ENCODE measurements at regions of chr10 and their contacts with region 1.

Region 1: GRCh38 chr10:128035557-128035973 is 90.7 kb downstream of the MKI67 start:
- DNase-seq: no peak
- ATAC-seq: peak; percentile 93
- H3K4me3 ChIP-seq: no peak overlapping the region
- H3K27ac ChIP-seq: no peak overlapping the region
- H3K4me1 ChIP-seq: no peaks in the 10 kb centered on the region
- H3K27me3 ChIP-seq: no peaks in the 10 kb centered on the region; a peak in 2 of 4 replicates
- CTCF ChIP-seq: peak; percentile 77 to 91 (median 78)
- EP300 ChIP-seq: no peak
- POLR2A ChIP-seq: no peak
- RAD21 ChIP-seq: peak; percentile 81

Region 2: DNA sequence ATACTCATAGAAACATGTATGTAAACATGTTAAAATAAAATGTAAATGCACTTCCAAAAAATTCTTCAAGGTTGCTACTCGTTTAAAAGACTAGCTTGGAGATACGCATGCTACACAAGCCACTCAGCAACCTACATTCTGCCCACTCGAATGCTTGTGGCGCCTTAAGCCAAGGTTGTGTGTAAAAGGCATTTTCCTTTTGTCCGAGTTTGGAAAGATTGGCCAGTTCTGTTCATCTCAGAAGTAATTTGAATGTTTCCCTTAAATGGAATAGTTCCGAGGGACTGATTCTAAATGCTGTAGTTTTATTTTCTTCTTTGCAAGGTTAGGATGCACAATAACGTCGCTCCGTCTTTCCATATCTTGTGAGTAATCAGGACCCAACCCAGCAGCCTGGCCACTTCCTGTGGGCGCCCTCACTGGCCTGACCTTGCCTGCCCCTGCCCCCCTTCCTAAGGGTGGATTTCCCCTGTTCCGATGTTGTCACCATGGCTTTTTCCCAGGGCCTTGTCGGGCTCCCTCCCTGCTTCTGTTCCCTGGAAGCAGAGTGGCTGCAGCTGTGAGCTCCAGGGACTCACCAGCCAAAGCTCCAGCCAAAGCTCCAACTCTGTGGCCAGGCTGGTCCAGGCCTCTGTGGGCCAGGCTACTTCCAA is 58.1 kb before region 1 on chr10:
- CTCF ChIA-PET with region 1: no interaction called
- POLR2A ChIA-PET with region 1: no interaction called
- RAD21 ChIA-PET with region 1: no interaction called
- SMC1A ChIA-PET with region 1: no interaction called
- in situ Hi-C with region 1: no loop called
- intact Hi-C with region 1: no loop called
- DNase-seq: no peak
- ATAC-seq: no peak
- H3K4me3 ChIP-seq: no peak overlapping the region
- H3K27ac ChIP-seq: no peak overlapping the region
- H3K4me1 ChIP-seq: no peaks in the 10 kb centered on the region
- H3K27me3 ChIP-seq: peaks cover 0 to 1% of the 10 kb centered on the region in 2 experiments; a peak in 1 of 4 replicates
- CTCF ChIP-seq: no peak
- EP300 ChIP-seq: no peak
- POLR2A ChIP-seq: no peak
- RAD21 ChIP-seq: no peak

Region 3: GRCh38 chr10:128047351-128047750 is 11.8 kb after region 1 on chr10:
- CTCF ChIA-PET with region 1: interaction called, 52 read pairs
- POLR2A ChIA-PET with region 1: interaction called, 5 read pairs
- RAD21 ChIA-PET with region 1: interaction called, 11 read pairs
- SMC1A ChIA-PET with region 1: interaction called, 26 read pairs
- in situ Hi-C with region 1: no loop called
- intact Hi-C with region 1: no loop called
- DNase-seq: peak; percentile 63
- ATAC-seq: peak; percentile 99
- H3K4me3 ChIP-seq: peak overlapping the region; percentile 70
- H3K27ac ChIP-seq: peak overlapping the region; percentile 54
- H3K4me1 ChIP-seq: peaks cover 30% of the 10 kb centered on the region
- H3K27me3 ChIP-seq: no peaks in the 10 kb centered on the region
- CTCF ChIP-seq: no peak
- EP300 ChIP-seq: no peak
- POLR2A ChIP-seq: peak; percentile 89
- RAD21 ChIP-seq: no peak

Region 4: GRCh38 chr10:128064108-128064969 is 28.8 kb after region 1 on chr10:
- CTCF ChIA-PET with region 1: interaction called, 277 read pairs
- POLR2A ChIA-PET with region 1: interaction called, 5 read pairs
- RAD21 ChIA-PET with region 1: interaction called, 103 read pairs
- SMC1A ChIA-PET with region 1: interaction called, 128 read pairs
- in situ Hi-C with region 1: no loop called
- intact Hi-C with region 1: loop called (anchors 1 kb)
- DNase-seq: peak; percentile 80
- ATAC-seq: peak; percentile 79
- H3K4me3 ChIP-seq: no peak overlapping the region
- H3K27ac ChIP-seq: peak overlapping the region; percentile 76
- H3K4me1 ChIP-seq: peaks cover 36% of the 10 kb centered on the region
- H3K27me3 ChIP-seq: no peaks in the 10 kb centered on the region
- CTCF ChIP-seq: no peak
- EP300 ChIP-seq: peak; percentile 49; a peak in 2 of 4 replicates
- POLR2A ChIP-seq: no peak
- RAD21 ChIP-seq: no peak

Region 5: GRCh38 chr10:128125944-128126764 is 90.6 kb after region 1 on chr10 and contains the start of gene MKI67:
- CTCF ChIA-PET with region 1: interaction called, 11 read pairs
- POLR2A ChIA-PET with region 1: no interaction called
- RAD21 ChIA-PET with region 1: no interaction called
- SMC1A ChIA-PET with region 1: interaction called, 4 read pairs
- in situ Hi-C with region 1: no loop called
- intact Hi-C with region 1: no loop called
- DNase-seq: peak; percentile 71
- ATAC-seq: peak; percentile 88
- H3K4me3 ChIP-seq: peak within 1 kb of the TSS; percentile 84
- H3K27ac ChIP-seq: peak within 1 kb of the TSS; percentile 89
- H3K4me1 ChIP-seq: peaks cover 6% of the 10 kb centered on the region
- H3K27me3 ChIP-seq: no peaks in the 10 kb centered on the region
- CTCF ChIP-seq: no peak
- EP300 ChIP-seq: no peak
- POLR2A ChIP-seq: peak; percentile 79
- RAD21 ChIP-seq: no peak
- polyA plus RNA-seq, gene MKI67: 22.3 to 37.5 TPM

Region 6: GRCh38 chr10:128150045-128150493 is 114.5 kb after region 1 on chr10:
- CTCF ChIA-PET with region 1: interaction called, 9 read pairs
- POLR2A ChIA-PET with region 1: no interaction called
- RAD21 ChIA-PET with region 1: interaction called, 3 read pairs
- SMC1A ChIA-PET with region 1: interaction called, 8 read pairs
- in situ Hi-C with region 1: no loop called
- intact Hi-C with region 1: loop called (anchors 2 kb)
- DNase-seq: no peak
- ATAC-seq: peak; percentile 94
- H3K4me3 ChIP-seq: peak overlapping the region; percentile 86
- H3K27ac ChIP-seq: no peak overlapping the region
- H3K4me1 ChIP-seq: peaks cover 8% of the 10 kb centered on the region
- H3K27me3 ChIP-seq: no peaks in the 10 kb centered on the region; a peak in 1 of 4 replicates
- CTCF ChIP-seq: peak; percentile 80 to 99 (median 90)
- EP300 ChIP-seq: no peak
- POLR2A ChIP-seq: no peak
- RAD21 ChIP-seq: peak; percentile 93

Region 7: DNA sequence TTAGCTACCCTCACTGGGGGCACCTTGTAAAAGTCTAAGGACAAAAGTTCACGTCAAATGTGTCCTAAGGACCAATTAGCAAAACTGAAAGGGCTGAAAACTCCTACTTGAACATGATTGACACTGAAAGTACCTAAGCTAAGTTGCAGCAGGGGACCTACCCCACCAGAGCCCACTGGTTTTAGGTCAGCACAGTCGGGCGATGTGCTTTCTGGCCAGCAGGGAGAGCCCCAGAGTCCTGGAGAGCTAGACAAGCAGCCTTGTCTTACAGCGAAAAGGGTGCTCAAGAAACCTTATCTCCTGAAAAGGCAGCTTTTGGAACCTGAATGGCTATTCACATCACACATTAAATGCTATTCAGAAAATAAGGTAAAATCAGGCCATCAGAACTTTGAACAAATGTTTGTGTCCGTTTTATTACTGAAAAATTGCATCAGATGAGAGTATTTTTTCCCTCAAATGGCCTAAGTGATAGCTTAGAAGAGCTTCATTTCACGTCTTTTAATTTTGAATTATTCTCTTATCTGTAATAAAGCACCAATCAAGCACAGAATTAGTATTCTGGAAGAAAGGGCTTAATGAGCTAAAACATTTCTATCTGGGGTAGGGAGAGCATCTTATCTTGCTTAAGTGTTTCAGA is 142.9 kb after region 1 on chr10:
- CTCF ChIA-PET with region 1: no interaction called
- POLR2A ChIA-PET with region 1: no interaction called
- RAD21 ChIA-PET with region 1: no interaction called
- SMC1A ChIA-PET with region 1: no interaction called
- in situ Hi-C with region 1: no loop called
- intact Hi-C with region 1: no loop called
- DNase-seq: no peak
- ATAC-seq: peak; percentile 90
- H3K4me3 ChIP-seq: no peak overlapping the region
- H3K27ac ChIP-seq: no peak overlapping the region
- H3K4me1 ChIP-seq: no peaks in the 10 kb centered on the region; the same call in 1 of the 2 replicates
- H3K27me3 ChIP-seq: no peaks in the 10 kb centered on the region
- CTCF ChIP-seq: peak; percentile 35 to 66 (median 54)
- EP300 ChIP-seq: no peak
- POLR2A ChIP-seq: no peak
- RAD21 ChIP-seq: no peak